ENCODE measurements at regions of chr15 and their contacts with region 1.

Region 1: DNA sequence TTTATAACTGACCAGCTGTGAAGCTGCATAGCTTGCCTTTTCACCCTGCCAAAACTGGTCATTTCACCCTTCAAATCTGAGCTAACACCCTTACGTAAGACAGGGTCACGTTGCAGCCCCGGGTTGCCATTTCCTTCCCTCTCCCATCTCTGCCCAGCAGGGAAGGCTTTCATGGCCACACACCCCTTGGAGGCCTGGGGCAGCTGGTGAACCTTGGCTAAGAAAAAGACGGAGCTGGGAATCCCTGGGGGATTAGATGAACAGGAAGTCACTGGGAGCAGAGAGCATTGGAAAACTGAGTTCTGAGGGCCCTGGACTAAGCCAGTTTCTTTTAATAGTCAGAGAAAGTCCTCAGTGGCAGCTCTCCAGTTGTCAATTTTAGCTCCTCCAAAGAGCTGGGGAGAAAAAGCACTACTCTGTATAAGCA is 67.8 kb downstream of the TTC23 start:
- DNase-seq: no peak
- H3K4me3 ChIP-seq: no peak overlapping the region
- H3K4me3 Mint-ChIP-seq: no peak overlapping the region
- H3K27ac Mint-ChIP-seq: peak overlapping the region; percentile 36
- H3K4me1 ChIP-seq: peaks cover 9% of the 10 kb centered on the region
- H3K4me1 Mint-ChIP-seq: peaks cover 28% of the 10 kb centered on the region
- H3K27me3 ChIP-seq: no peaks in the 10 kb centered on the region
- H3K27me3 Mint-ChIP-seq: no peaks in the 10 kb centered on the region
- CTCF ChIP-seq: no peak

Region 2: GRCh38 chr15:99155961-99156450 is 25.6 kb before region 1 on chr15:
- CTCF ChIA-PET with region 1: no interaction called
- POLR2A ChIA-PET with region 1: no interaction called
- intact Hi-C with region 1: loop called (anchors 2 kb)
- DNase-seq: peak; percentile 44 to 51
- H3K4me3 ChIP-seq: no peak overlapping the region
- H3K4me3 Mint-ChIP-seq: peak overlapping the region; percentile 32
- H3K27ac Mint-ChIP-seq: no peak overlapping the region
- H3K4me1 ChIP-seq: peaks cover 39% of the 10 kb centered on the region
- H3K4me1 Mint-ChIP-seq: peaks cover 22% of the 10 kb centered on the region
- H3K27me3 ChIP-seq: no peaks in the 10 kb centered on the region
- H3K27me3 Mint-ChIP-seq: no peaks in the 10 kb centered on the region
- CTCF ChIP-seq: no peak

Measured in Caco-2 (cell line).